PC-3 (cell line): ENCODE measurements at regions of chr5 and their contacts with region 1.

Region 1: DNA sequence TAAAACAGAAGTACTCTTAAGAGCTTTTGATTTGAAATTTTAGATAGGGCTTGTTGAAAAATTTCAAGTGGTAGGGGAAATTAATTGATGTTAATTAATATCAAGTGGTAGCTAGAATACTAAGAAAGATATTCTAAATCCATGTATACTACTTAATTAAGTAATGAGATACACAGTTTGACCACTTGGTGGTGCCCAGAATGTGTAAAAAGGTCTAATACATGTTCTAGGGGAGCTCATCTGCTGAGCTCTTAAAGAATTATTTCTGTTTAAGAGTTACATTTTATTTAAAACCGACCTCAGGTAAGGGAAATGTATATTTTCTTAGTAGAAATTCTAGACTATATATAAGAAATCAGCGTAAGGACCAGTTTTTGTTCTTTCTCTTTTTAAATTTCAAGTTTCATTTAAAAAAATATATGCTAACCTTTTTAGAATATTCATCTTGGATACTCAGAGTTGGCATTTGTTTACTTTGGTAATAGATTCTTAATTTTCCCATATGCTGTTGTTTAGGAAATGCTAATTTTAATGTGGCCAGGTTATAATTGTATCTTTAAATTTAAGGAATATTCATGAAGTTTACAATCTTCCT is 61.5 kb downstream of the LNPEP start:
- DNase-seq: peak; percentile 63
- ATAC-seq: peak; percentile 78
- H3K4me3 ChIP-seq: no peak overlapping the region
- H3K27ac ChIP-seq: no peak overlapping the region
- H3K4me1 ChIP-seq: no peaks in the 10 kb centered on the region
- H3K27me3 ChIP-seq: no peaks in the 10 kb centered on the region
- CTCF ChIP-seq: peak; percentile 73

Region 2: GRCh38 chr5:96868603-96869371 is 128.6 kb before region 1 on chr5:
- CTCF ChIA-PET with region 1: interaction called, 10 read pairs
- POLR2A ChIA-PET with region 1: no interaction called
- intact Hi-C with region 1: loop called (anchors 10 kb)
- DNase-seq: peak; percentile 76
- ATAC-seq: peak; percentile 97
- H3K4me3 ChIP-seq: no peak overlapping the region
- H3K27ac ChIP-seq: no peak overlapping the region
- H3K4me1 ChIP-seq: peaks cover 7% of the 10 kb centered on the region; the same call in 1 of the 2 replicates
- H3K27me3 ChIP-seq: no peaks in the 10 kb centered on the region
- CTCF ChIP-seq: peak; percentile 94

Region 3: DNA sequence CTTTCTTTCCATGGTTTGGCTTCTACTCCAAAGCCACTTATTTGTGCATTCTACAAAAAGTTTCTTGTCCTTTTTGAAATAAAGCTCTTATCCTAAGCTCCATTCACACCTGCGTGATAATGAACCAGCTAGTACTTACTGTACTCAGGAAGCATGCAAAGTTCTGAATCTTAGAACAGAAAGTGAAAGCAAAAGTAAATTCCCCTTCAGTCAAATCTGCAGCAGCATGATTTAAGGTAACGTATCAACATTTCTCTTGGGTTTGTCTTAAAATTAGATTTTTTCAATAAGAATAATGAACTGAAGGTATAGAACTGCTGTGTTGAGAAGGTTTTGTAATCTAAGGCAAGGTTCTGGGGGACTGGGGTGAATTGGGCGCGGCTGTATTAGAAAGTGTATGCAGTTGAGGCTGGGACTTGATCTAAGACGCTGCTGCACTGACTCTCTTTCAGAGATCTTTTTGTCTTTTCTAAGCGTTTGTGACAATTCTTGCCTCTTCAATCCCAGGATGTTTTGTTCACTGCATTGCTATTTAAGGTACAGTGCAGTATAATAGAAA is 121.0 kb before region 1 on chr5 and contains the start of gene ERAP2:
- CTCF ChIA-PET with region 1: no interaction called
- POLR2A ChIA-PET with region 1: no interaction called
- intact Hi-C with region 1: loop called (anchors 10 kb)
- DNase-seq: peak; percentile 59
- ATAC-seq: peak; percentile 43
- H3K4me3 ChIP-seq: peak within 1 kb of the TSS; percentile 83
- H3K27ac ChIP-seq: peak within 1 kb of the TSS; percentile 42
- H3K4me1 ChIP-seq: peaks cover 26% of the 10 kb centered on the region
- H3K27me3 ChIP-seq: no peaks in the 10 kb centered on the region
- CTCF ChIP-seq: no peak
- total RNA-seq, gene ERAP2: 9.6 and 12.0 TPM in 2 replicates

Region 4: GRCh38 chr5:97162045-97162444 is 164.7 kb after region 1 on chr5:
- CTCF ChIA-PET with region 1: no interaction called
- POLR2A ChIA-PET with region 1: no interaction called
- intact Hi-C with region 1: loop called (anchors 5 kb)
- DNase-seq: peak; percentile 87
- ATAC-seq: peak; percentile 84
- H3K4me3 ChIP-seq: no peak overlapping the region
- H3K27ac ChIP-seq: no peak overlapping the region
- H3K4me1 ChIP-seq: 0 out of 2 replicates have a peak, but pooled peaks cover 4% of the 10 kb centered on the region
- H3K27me3 ChIP-seq: no peaks in the 10 kb centered on the region
- CTCF ChIP-seq: peak; percentile 94